ENCODE measurements at regions of chr1 and their contacts with region 1.

Region 1: DNA sequence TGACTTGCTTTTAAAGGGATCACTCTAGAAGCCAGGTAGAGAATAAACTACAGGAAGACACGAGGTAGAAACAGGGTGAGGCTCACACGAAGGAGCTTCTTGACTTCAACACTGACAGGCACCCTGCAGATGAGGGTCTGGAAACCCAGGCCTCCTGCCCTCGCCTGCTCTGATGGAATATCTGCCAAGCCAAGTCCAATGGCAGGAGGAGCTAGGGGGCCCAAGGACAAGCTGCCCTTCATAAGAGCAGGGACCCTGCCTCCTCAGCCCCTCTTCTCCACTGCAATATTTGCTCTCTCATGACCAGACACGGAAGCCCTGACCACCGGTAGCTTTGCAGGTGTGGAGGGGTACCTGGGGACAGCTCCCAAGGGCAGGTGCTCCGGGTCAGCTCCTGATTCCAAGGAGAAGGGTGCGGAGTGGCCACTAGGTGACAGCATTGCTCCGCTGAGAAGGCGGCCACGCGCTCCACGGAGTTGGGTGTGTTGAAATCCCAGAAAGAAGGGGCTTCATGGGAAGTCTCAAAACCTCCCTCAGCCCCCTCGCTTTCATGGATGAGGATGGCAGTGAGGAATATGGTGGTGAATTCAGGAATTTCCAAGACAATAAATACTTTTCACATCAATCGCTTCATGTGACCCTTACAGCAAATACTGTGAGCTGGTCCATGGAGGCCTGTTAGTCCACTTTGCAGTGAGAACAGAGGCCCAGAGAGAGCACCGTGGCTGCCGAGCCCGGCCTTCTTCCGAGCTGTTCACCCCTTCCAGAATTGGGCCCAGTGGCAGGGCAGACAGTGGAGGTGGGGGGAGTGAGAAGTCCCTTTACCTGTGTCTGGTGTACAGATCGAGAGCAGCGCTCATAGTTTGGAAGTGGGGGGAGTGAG is 33.2 kb upstream of the PAX7 start:
- DNase-seq: peak; percentile 41
- ATAC-seq: no peak
- H3K4me3 ChIP-seq: no peak overlapping the region
- H3K4me3 Mint-ChIP-seq: no peak overlapping the region
- H3K27ac ChIP-seq: no peak overlapping the region
- H3K27ac Mint-ChIP-seq: no peak overlapping the region
- H3K4me1 ChIP-seq: no peaks in the 10 kb centered on the region
- H3K4me1 Mint-ChIP-seq: no peaks in the 10 kb centered on the region
- H3K27me3 ChIP-seq: peaks cover 0 to 15% (median 2%) of the 10 kb centered on the region in 4 experiments
- H3K27me3 Mint-ChIP-seq: peaks cover 40% of the 10 kb centered on the region
- CTCF ChIP-seq: peak; percentile 62

Region 2: GRCh38 chr1:17768651-17769241 is 828.7 kb before region 1 on chr1:
- CTCF ChIA-PET with region 1: no interaction called
- POLR2A ChIA-PET with region 1: no interaction called
- intact Hi-C with region 1: no loop called
- DNase-seq: no peak
- ATAC-seq: no peak
- H3K4me3 ChIP-seq: no peak overlapping the region
- H3K4me3 Mint-ChIP-seq: no peak overlapping the region
- H3K27ac ChIP-seq: no peak overlapping the region
- H3K27ac Mint-ChIP-seq: no peak overlapping the region
- H3K4me1 ChIP-seq: no peaks in the 10 kb centered on the region
- H3K4me1 Mint-ChIP-seq: no peaks in the 10 kb centered on the region
- H3K27me3 ChIP-seq: peaks cover 0 to 3% (median 0%) of the 10 kb centered on the region in 4 experiments
- H3K27me3 Mint-ChIP-seq: peaks cover 15% of the 10 kb centered on the region
- CTCF ChIP-seq: no peak

Region 3: GRCh38 chr1:18820791-18821641 is 223.6 kb after region 1 on chr1:
- CTCF ChIA-PET with region 1: interaction called, 4 read pairs
- POLR2A ChIA-PET with region 1: no interaction called
- intact Hi-C with region 1: loop called (anchors 5 kb)
- DNase-seq: peak; percentile 31
- ATAC-seq: no peak
- H3K4me3 ChIP-seq: no peak overlapping the region
- H3K4me3 Mint-ChIP-seq: no peak overlapping the region
- H3K27ac ChIP-seq: no peak overlapping the region
- H3K27ac Mint-ChIP-seq: no peak overlapping the region
- H3K4me1 ChIP-seq: no peaks in the 10 kb centered on the region
- H3K4me1 Mint-ChIP-seq: no peaks in the 10 kb centered on the region
- H3K27me3 ChIP-seq: peaks cover 0 to 12% (median 2%) of the 10 kb centered on the region in 4 experiments
- H3K27me3 Mint-ChIP-seq: peaks cover 53% of the 10 kb centered on the region
- CTCF ChIP-seq: peak; percentile 72

Measured in B cell (primary cell).